Panc1 (cell line): ENCODE measurements at regions of chr3 and their contacts with region 1.

Region 1: DNA sequence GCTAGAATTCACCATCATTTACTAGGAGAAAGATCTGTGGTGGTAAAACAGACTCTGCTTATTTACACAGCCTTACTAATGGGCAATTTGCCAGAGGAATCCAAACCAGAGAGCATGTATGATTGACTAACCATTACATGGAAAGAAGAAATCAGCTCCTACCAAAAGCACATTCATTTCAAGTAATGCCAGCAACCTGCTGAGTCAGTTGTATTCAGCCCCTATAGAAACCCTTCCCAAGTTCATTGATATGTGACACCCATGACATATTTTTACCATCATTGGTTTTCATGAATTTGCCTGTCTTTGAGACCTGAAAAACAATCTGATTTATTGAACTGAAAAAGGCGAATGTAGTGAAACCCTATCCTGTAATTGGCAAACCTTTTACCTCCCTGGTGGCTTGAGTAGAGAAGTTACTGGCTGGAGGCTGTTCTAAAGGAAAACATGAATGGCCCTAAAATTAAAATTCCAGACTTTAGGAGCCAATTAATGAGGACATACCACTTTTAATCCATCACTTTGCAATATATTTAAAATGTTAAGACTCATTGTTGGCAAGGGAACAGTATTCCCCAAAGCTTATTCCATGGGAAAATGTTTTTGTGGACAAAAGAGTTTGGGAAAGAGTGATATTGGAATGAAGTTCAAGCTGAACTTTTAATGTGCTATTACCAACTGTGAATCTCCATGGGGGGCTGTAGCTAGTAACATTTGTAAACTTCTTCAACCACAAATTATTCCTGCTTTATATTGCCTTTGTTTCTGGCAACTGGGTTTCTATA is 542.9 kb downstream of the FHIT start:
- DNase-seq: no peak
- ATAC-seq: no peak
- H3K4me3 ChIP-seq: no peak overlapping the region
- H3K27ac ChIP-seq: no peak overlapping the region
- H3K4me1 ChIP-seq: no peaks in the 10 kb centered on the region
- H3K27me3 ChIP-seq: no peaks in the 10 kb centered on the region
- CTCF ChIP-seq: no peak

Region 2: DNA sequence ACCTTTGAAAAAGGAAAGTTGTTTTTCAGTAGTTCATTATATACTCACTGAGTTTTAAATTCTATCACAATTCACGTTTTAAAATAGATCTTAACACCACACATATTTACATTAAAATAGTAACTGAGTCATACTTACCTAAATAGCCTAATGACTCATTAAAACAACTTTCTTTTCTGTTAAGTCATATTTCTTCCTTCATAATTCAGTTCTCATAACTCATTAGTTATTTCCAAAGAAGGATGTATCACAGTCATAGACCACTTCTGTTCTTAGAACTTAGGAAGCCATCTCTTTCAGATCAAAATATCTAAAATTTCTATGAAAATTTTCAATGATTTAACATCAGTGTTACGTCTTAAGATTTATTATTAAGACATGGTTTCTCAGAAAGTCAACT is 343.0 kb before region 1 on chr3:
- CTCF ChIA-PET with region 1: no interaction called
- POLR2A ChIA-PET with region 1: no interaction called
- in situ Hi-C with region 1: no loop called
- intact Hi-C with region 1: no loop called
- DNase-seq: no peak
- ATAC-seq: no peak
- H3K4me3 ChIP-seq: no peak overlapping the region
- H3K27ac ChIP-seq: no peak overlapping the region
- H3K4me1 ChIP-seq: no peaks in the 10 kb centered on the region
- H3K27me3 ChIP-seq: no peaks in the 10 kb centered on the region
- CTCF ChIP-seq: no peak

Region 3: GRCh38 chr3:60582288-60582687 is 126.1 kb before region 1 on chr3:
- CTCF ChIA-PET with region 1: no interaction called
- POLR2A ChIA-PET with region 1: no interaction called
- in situ Hi-C with region 1: no loop called
- intact Hi-C with region 1: no loop called
- DNase-seq: no peak
- ATAC-seq: no peak
- H3K4me3 ChIP-seq: no peak overlapping the region
- H3K27ac ChIP-seq: no peak overlapping the region
- H3K4me1 ChIP-seq: no peaks in the 10 kb centered on the region
- H3K27me3 ChIP-seq: no peaks in the 10 kb centered on the region
- CTCF ChIP-seq: no peak

Region 4: DNA sequence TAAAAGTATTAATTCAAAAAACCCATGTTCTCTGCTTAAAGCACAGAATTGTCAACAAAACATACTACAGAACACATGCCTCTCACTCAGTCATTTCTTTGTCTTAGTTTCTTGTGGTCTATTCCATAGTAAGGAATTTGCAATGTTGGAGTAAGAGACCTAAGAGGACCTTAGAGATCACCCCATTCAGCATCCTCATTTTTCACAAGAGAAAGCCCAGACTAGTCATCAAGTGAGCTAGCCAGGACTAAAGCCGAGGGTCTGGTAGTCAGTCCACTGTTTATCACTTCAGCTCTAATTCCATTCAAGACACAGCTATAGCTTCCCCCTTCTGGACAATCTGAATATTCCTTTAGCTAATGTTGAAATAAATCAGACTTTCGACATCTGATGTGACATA is 58.2 kb before region 1 on chr3:
- CTCF ChIA-PET with region 1: interaction called, 10 read pairs
- POLR2A ChIA-PET with region 1: no interaction called
- in situ Hi-C with region 1: no loop called
- intact Hi-C with region 1: no loop called
- DNase-seq: no peak
- ATAC-seq: no peak
- H3K4me3 ChIP-seq: no peak overlapping the region
- H3K27ac ChIP-seq: no peak overlapping the region
- H3K4me1 ChIP-seq: no peaks in the 10 kb centered on the region
- H3K27me3 ChIP-seq: no peaks in the 10 kb centered on the region
- CTCF ChIP-seq: no peak